Psoas muscle (tissue), 8 donors: ENCODE measurements at regions of chr15 and their contacts with region 1.

Region 1: GRCh38 chr15:55649054-55649423 is 60.9 kb upstream of the PYGO1 start:
- DNase-seq: no peak
- ATAC-seq: peak in 1 of 4 donors; percentile 27
- H3K4me3 ChIP-seq: no peak overlapping the region
- H3K27ac ChIP-seq: no peak overlapping the region
- H3K4me1 ChIP-seq: no peaks in the 10 kb centered on the region
- H3K27me3 ChIP-seq: no peaks in the 10 kb centered on the region
- CTCF ChIP-seq: no peak

Region 2: GRCh38 chr15:55366981-55367380 is 282.1 kb before region 1 on chr15:
- intact Hi-C with region 1: no loop called
- DNase-seq: no peak
- ATAC-seq: no peak
- H3K4me3 ChIP-seq: no peak overlapping the region
- H3K27ac ChIP-seq: no peak overlapping the region
- H3K4me1 ChIP-seq: no peaks in the 10 kb centered on the region
- H3K27me3 ChIP-seq: no peaks in the 10 kb centered on the region
- CTCF ChIP-seq: no peak

Region 3: DNA sequence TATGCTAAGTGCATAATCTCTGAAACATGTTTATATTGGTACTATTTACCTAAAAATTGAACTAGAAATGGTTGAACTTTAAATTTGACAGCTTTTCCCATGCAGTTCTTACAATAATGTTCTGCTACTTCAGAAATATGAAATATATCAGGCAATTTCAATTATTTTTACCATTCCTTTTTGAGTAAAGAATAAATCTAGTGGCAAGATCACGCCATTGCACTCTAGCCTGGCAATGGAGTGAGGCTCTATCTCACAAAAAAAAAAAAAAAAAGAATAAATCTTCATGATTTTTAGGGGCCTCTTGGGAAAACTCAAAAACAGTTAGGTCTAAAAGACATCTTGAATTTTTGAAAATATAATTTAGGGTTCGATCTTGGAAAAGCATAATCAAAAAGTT is 130.4 kb before region 1 on chr15:
- intact Hi-C with region 1: loop called (anchors 5 kb)
- DNase-seq: no peak
- ATAC-seq: no peak
- H3K4me3 ChIP-seq: no peak overlapping the region
- H3K27ac ChIP-seq: no peak overlapping the region
- H3K4me1 ChIP-seq: no peaks in the 10 kb centered on the region
- H3K27me3 ChIP-seq: no peaks in the 10 kb centered on the region
- CTCF ChIP-seq: peak; percentile 5

Region 4: GRCh38 chr15:55526559-55527036 is 122.4 kb before region 1 on chr15:
- intact Hi-C with region 1: loop called in 1 of 2 experiments (anchors 5 kb)
- DNase-seq: no peak
- ATAC-seq: peak; percentile 64 to 86 (median 80)
- H3K4me3 ChIP-seq: no peak overlapping the region
- H3K27ac ChIP-seq: no peak overlapping the region
- H3K4me1 ChIP-seq: peaks cover 9% of the 10 kb centered on the region
- H3K27me3 ChIP-seq: no peaks in the 10 kb centered on the region
- CTCF ChIP-seq: peak; percentile 56

Region 5: GRCh38 chr15:55715355-55716076 is 66.5 kb after region 1 on chr15:
- intact Hi-C with region 1: no loop called
- DNase-seq: no peak
- ATAC-seq: no peak
- H3K4me3 ChIP-seq: no peak overlapping the region
- H3K27ac ChIP-seq: no peak overlapping the region
- H3K4me1 ChIP-seq: no peaks in the 10 kb centered on the region
- H3K27me3 ChIP-seq: no peaks in the 10 kb centered on the region
- CTCF ChIP-seq: no peak

Region 6: DNA sequence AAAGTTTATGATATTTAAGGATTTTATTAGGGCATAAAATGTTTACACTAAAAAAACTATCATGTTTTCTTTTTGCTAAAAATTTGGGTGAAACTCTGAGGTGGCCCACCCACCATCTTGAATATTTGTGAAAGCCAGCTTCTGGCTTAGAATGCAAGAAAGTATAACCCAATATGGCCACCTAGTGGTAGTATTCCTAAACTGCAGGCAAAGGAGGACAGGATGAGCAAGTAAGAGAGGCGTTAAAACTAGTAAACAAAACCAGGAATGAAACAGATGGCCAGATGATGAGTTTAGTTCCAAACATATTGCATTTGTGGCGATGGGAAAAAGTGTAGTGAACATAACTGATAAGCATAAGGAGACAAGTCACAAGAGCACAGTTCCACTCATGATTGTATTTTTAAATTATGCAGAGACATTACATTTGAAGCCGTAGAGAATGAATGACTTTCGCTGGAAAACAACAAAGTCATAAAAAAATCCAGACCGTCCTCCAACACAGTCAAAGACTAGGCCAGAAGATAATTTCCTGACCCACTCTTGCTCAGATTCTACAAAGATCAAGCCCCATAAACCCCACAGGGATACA is 197.2 kb after region 1 on chr15:
- intact Hi-C with region 1: loop called in 1 of 2 experiments (anchors 5 kb)
- DNase-seq: no peak
- ATAC-seq: peak; percentile 53 to 76 (median 70)
- H3K4me3 ChIP-seq: no peak overlapping the region
- H3K27ac ChIP-seq: no peak overlapping the region
- H3K4me1 ChIP-seq: no peaks in the 10 kb centered on the region
- H3K27me3 ChIP-seq: no peaks in the 10 kb centered on the region
- CTCF ChIP-seq: peak; percentile 88

Region 7: GRCh38 chr15:55917881-55918296 is 268.9 kb after region 1 on chr15:
- intact Hi-C with region 1: loop called (anchors 5 kb)
- DNase-seq: no peak
- ATAC-seq: peak; percentile 29 to 72 (median 55)
- H3K4me3 ChIP-seq: peak overlapping the region; percentile 68
- H3K27ac ChIP-seq: peak overlapping the region; percentile 82
- H3K4me1 ChIP-seq: no peaks in the 10 kb centered on the region
- H3K27me3 ChIP-seq: no peaks in the 10 kb centered on the region
- CTCF ChIP-seq: peak; percentile 73

Region 8: GRCh38 chr15:56052395-56053045 is 403.5 kb after region 1 on chr15:
- intact Hi-C with region 1: loop called (anchors 5 to 10 kb)
- DNase-seq: no peak
- ATAC-seq: peak; percentile 48 to 77 (median 60)
- H3K4me3 ChIP-seq: no peak overlapping the region
- H3K27ac ChIP-seq: no peak overlapping the region
- H3K4me1 ChIP-seq: no peaks in the 10 kb centered on the region
- H3K27me3 ChIP-seq: no peaks in the 10 kb centered on the region
- CTCF ChIP-seq: peak; percentile 80